A549 (cell line): ENCODE measurements at regions of chr17 and their contacts with region 1.

Region 1: DNA sequence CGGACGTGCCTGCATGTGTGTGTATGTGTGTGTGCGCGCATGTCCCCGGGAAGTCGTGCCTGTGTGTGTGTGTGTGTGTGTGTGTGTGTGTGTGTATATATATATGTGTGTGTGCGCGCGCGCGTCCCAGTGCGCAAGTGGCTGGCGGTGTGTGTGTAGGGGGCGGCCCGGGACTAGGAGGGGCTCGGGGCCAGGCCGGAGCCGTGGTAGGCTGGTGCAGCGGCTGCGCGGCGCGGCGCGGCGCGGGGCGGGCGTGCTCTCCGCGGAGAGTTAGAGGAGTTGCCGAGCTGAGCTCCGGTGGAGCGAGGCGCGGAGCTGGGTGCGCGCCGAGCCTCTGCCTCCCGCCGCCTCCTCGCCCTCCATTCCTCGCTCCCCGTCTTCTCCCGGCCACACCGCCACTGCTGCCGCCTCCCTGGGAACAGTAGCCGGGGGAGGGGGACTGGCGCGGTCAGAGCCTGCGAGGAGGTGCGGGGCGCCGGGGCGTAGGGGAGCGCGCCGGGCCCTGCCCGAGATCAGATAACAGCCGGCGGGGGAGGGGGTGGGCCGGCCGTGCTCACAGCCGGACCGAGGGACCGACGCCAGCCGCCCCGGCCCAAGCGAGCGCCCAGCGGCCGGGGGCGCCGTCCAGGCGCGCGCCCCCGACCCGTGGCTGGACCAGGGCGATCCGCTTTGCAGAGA is at the start of gene KCNJ12:
- DNase-seq: no peak
- ATAC-seq: peak; percentile 33 to 38; a peak in 5 of 6 replicates
- H3K4me3 ChIP-seq: peak within 1 kb of the TSS; percentile 52
- H3K27ac ChIP-seq: peak within 1 kb of the TSS; percentile 62 to 85
- H3K4me1 ChIP-seq: peaks cover 4% of the 10 kb centered on the region; the same call in 1 of the 3 replicates
- CTCF ChIP-seq: no peak
- EP300 ChIP-seq: no peak
- POLR2A ChIP-seq: peak; percentile 15; the same call in 1 of the 2 replicates
- RAD21 ChIP-seq: no peak
- polyA plus RNA-seq, gene KCNJ12: 0.34 and 0.38 TPM in 2 replicates

Region 2: GRCh38 chr17:21358707-21359482 is 17.3 kb before region 1 on chr17:
- CTCF ChIA-PET with region 1: interaction called, 13 read pairs
- POLR2A ChIA-PET with region 1: no interaction called
- DNase-seq: peak in 1 of 2 experiments; percentile 53
- ATAC-seq: peak; percentile 59 to 76; a peak in 4 of 6 replicates
- H3K4me3 ChIP-seq: no peak overlapping the region
- H3K27ac ChIP-seq: peak overlapping the region in 1 of 2 experiments; percentile 14; a peak in 1 of 6 replicates
- H3K4me1 ChIP-seq: peaks cover 11% of the 10 kb centered on the region; the same call in 1 of the 3 replicates
- CTCF ChIP-seq: no peak
- EP300 ChIP-seq: no peak
- POLR2A ChIP-seq: no peak
- RAD21 ChIP-seq: no peak

Region 3: DNA sequence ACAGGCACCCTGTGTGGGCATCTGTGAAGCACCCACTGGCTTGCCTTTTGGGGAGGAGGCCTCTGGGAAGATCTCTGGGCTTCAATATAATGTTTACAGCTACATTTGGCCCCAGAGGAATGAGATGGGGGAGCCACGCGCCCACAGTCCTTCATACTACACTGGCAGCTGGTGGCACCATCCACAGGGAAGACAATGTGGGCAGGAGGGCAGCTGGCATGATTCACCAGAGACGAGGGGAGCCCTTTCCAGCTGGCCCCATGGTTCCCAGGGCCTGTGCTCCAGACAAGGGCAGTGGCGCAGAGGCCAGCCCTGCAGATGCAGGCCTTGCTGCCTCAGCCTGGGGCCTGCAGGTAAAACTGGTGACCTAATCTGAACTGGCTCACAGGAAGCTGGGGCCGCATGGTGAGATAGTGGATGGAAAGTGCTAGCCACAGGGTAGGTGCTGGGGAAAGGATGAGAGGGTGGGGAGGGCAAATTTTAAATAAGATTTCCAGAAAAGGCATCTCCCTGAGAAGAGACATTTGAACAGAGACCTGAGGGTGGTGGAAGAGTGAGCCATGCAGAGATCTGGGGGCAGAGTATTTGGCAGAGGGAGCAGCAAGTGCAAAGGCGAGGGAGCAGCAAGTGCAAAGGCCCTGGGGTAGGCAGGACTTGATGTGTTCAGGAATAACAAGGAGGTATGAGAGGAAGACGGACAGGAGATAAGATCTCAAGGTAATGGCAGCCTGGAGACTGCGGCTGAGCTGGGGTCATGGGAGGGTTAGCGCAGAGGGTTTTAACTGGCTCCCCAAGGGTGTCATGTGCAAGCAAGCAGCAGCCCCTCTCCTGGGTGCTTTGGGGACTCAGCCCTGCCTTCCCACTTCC is 12.2 kb before region 1 on chr17:
- CTCF ChIA-PET with region 1: interaction called, 13 read pairs
- POLR2A ChIA-PET with region 1: no interaction called
- DNase-seq: no peak
- ATAC-seq: no peak
- H3K4me3 ChIP-seq: no peak overlapping the region
- H3K27ac ChIP-seq: no peak overlapping the region
- H3K4me1 ChIP-seq: peaks cover 4% of the 10 kb centered on the region; the same call in 1 of the 3 replicates
- CTCF ChIP-seq: no peak
- EP300 ChIP-seq: no peak
- POLR2A ChIP-seq: no peak
- RAD21 ChIP-seq: no peak